CD14-positive monocyte (primary cell): ENCODE measurements at regions of chr17 and their contacts with region 1.

Region 1: GRCh38 chr17:27601069-27601975 is 29.7 kb upstream of the LGALS9 start:
- DNase-seq: peak; percentile 63 to 75 (median 70)
- H3K4me3 ChIP-seq: no peak overlapping the region
- H3K4me3 Mint-ChIP-seq: no peak overlapping the region
- H3K27ac ChIP-seq: no peak overlapping the region
- H3K27ac Mint-ChIP-seq: peak overlapping the region in 2 of 7 donors; percentile 21 to 44
- H3K4me1 ChIP-seq: no peaks in the 10 kb centered on the region
- H3K4me1 Mint-ChIP-seq: peaks cover 8% of the 10 kb centered on the region
- H3K27me3 ChIP-seq: no peaks in the 10 kb centered on the region
- H3K27me3 Mint-ChIP-seq: peaks cover 0 to 2% (median 0%) of the 10 kb centered on the region in 3 donors
- CTCF ChIP-seq: peak; percentile 96

Region 2: GRCh38 chr17:27236717-27237315 is 364.5 kb before region 1 on chr17:
- intact Hi-C with region 1: loop called (anchors 5 kb)
- DNase-seq: peak; percentile 62 to 84 (median 72)
- H3K4me3 ChIP-seq: no peak overlapping the region
- H3K4me3 Mint-ChIP-seq: no peak overlapping the region
- H3K27ac ChIP-seq: peak overlapping the region in 1 of 2 donors; percentile 36
- H3K27ac Mint-ChIP-seq: peak overlapping the region in 2 of 7 donors; percentile 15 to 41
- H3K4me1 ChIP-seq: peaks cover 69 to 75% of the 10 kb centered on the region in 2 donors
- H3K4me1 Mint-ChIP-seq: peaks cover 70% of the 10 kb centered on the region
- H3K27me3 ChIP-seq: no peaks in the 10 kb centered on the region
- H3K27me3 Mint-ChIP-seq: peaks cover 0 to 2% (median 0%) of the 10 kb centered on the region in 3 donors
- CTCF ChIP-seq: peak; percentile 96

Region 3: DNA sequence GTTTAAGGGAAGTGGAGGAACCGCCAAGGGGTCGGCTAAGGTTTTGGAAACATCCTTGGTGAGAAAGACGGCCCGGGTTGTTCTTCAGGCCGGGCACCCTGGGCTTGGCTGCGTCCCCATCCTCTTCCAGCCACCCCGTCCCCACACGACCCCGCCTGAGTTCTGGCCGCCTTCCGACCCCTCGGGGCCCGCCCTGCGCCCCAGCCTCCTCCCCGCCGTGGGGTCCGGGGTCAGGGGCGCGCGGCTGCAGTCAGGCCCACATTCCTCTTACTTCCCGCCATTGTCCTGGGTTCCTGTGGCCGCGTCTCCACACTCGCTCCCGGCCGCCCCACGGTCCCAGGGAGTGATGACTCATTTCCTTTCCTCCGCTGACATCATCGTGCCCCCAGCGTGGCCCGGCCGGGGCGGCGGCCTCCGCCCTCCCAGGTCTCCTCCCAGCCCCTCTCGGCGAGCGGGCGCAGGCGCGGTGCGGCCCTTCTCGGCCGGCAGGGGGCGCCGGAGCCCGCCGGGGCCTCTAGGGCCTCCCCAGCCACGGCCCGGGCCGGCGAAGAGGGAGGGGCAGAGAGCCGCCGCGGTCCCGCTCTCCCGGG is 247.8 kb before region 1 on chr17:
- intact Hi-C with region 1: loop called (anchors 1 to 2 kb)
- DNase-seq: peak; percentile 90 to 96 (median 90)
- H3K4me3 ChIP-seq: peak overlapping the region; percentile 55 to 76 (median 74)
- H3K4me3 Mint-ChIP-seq: peak overlapping the region; percentile 75 to 87
- H3K27ac ChIP-seq: peak overlapping the region; percentile 60 to 81
- H3K27ac Mint-ChIP-seq: peak overlapping the region; percentile 84 to 95 (median 89)
- H3K4me1 ChIP-seq: peaks cover 22 to 34% of the 10 kb centered on the region in 2 donors
- H3K4me1 Mint-ChIP-seq: peaks cover 30% of the 10 kb centered on the region
- H3K27me3 ChIP-seq: no peaks in the 10 kb centered on the region
- H3K27me3 Mint-ChIP-seq: peaks cover 0 to 2% (median 2%) of the 10 kb centered on the region in 3 donors
- CTCF ChIP-seq: peak; percentile 85

Region 4: DNA sequence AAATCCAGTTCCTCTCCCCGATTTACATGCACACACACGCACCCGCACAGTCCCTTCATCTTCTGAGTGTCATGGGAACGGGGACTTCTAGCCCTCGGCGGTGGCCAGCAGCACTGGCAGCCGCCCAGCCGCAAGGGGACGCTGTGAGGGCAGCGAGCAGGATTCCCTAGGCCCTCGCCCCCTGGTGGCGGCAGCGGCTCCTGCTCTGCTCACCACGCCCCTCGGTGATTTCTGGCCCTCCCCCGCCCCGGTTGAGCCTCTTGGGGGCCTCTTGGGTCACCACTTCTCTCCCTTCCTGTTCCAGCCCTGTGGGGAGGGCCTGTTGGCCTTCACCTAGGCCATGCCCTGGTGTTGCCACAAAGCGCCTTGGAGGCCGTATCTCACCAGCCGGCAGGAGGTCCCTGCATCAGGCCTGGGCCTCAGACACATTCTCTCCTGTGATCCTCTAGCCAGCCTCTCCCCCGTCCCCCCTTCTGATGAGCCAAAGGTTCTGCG is 220.3 kb before region 1 on chr17:
- intact Hi-C with region 1: loop called in 1 of 2 experiments (anchors 5 kb)
- DNase-seq: peak; percentile 77 to 84 (median 83)
- H3K4me3 ChIP-seq: peak overlapping the region in 1 of 3 experiments; percentile 49
- H3K4me3 Mint-ChIP-seq: peak overlapping the region in 1 of 2 donors; percentile 77
- H3K27ac ChIP-seq: no peak overlapping the region
- H3K27ac Mint-ChIP-seq: peak overlapping the region in 4 of 7 donors; percentile 15 to 70 (median 44)
- H3K4me1 ChIP-seq: peaks cover 14 to 16% of the 10 kb centered on the region in 2 donors
- H3K4me1 Mint-ChIP-seq: peaks cover 17% of the 10 kb centered on the region
- H3K27me3 ChIP-seq: no peaks in the 10 kb centered on the region
- H3K27me3 Mint-ChIP-seq: peaks cover 6 to 13% (median 8%) of the 10 kb centered on the region in 3 donors
- CTCF ChIP-seq: peak; percentile 100

Region 5: GRCh38 chr17:27552469-27552779 is 48.9 kb before region 1 on chr17:
- intact Hi-C with region 1: no loop called
- DNase-seq: peak in 2 of 3 donors; percentile 27 to 78
- H3K4me3 ChIP-seq: no peak overlapping the region
- H3K4me3 Mint-ChIP-seq: no peak overlapping the region
- H3K27ac ChIP-seq: no peak overlapping the region
- H3K27ac Mint-ChIP-seq: peak overlapping the region in 2 of 7 donors; percentile 25 to 37
- H3K4me1 ChIP-seq: peaks cover 3 to 6% of the 10 kb centered on the region in 2 donors
- H3K4me1 Mint-ChIP-seq: peaks cover 7% of the 10 kb centered on the region
- H3K27me3 ChIP-seq: no peaks in the 10 kb centered on the region
- H3K27me3 Mint-ChIP-seq: no peaks in the 10 kb centered on the region
- CTCF ChIP-seq: no peak

Region 6: DNA sequence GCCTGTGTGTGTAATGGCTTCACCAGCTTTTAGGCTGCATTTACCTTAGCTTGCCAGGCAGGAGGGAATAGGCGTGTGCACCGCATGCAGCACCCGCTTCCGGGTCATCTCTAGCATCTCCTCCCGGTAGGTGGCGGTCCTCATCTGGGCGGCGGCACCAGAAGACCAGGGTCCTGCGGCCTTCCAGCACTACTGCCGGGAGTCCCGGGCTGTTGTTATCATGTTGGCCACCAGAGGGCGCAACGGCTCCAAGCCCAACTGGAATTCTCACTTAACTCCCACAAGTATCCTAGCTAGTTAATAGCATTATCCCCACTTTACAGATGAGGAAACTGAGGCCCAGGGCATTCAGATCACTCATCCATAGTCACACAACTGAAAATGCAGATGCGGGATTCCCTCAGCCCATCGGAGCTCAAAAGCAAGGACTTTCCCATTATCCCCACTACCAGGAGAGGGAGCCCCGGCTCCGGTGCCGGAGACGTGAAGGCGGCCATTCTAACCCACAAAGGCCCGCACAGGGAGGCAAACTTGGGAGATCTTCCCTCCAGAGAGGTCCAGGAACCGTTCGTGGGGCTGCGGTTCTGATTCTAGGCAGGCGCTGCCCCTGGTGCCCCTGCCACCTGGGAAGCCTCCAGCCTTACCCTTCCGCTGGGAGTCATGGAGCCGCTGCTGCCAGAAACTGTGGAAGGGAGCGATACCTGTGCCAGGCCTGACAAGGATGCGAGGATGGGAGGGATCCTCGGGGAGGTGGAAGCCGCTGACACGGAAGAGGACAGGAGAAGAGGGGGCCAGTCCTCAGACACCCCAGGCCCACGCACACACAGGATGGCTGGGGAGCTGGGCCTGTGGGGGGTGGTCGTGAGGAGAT is 53.6 kb after region 1 on chr17:
- intact Hi-C with region 1: loop called (anchors 2 kb)
- DNase-seq: peak; percentile 51 to 72 (median 59)
- H3K4me3 ChIP-seq: no peak overlapping the region
- H3K4me3 Mint-ChIP-seq: no peak overlapping the region
- H3K27ac ChIP-seq: no peak overlapping the region
- H3K27ac Mint-ChIP-seq: peak overlapping the region in 1 of 7 donors; percentile 2
- H3K4me1 ChIP-seq: no peaks in the 10 kb centered on the region
- H3K4me1 Mint-ChIP-seq: no peaks in the 10 kb centered on the region
- H3K27me3 ChIP-seq: no peaks in the 10 kb centered on the region
- H3K27me3 Mint-ChIP-seq: peaks cover 1 to 5% (median 2%) of the 10 kb centered on the region in 3 donors
- CTCF ChIP-seq: peak; percentile 96